Ovary (tissue), 10 donors: ENCODE measurements at regions of chr6 and their contacts with region 1.

Region 1: GRCh38 chr6:35293671-35294070 is 3.9 kb upstream of the DEF6 start:
- DNase-seq: no peak
- H3K4me3 ChIP-seq: no peak overlapping the region
- H3K27ac ChIP-seq: no peak overlapping the region
- H3K4me1 ChIP-seq: peaks cover 4% of the 10 kb centered on the region
- H3K27me3 ChIP-seq: no peaks in the 10 kb centered on the region
- CTCF ChIP-seq: no peak
- EP300 ChIP-seq: no peak
- POLR2A ChIP-seq: no peak

Region 2: DNA sequence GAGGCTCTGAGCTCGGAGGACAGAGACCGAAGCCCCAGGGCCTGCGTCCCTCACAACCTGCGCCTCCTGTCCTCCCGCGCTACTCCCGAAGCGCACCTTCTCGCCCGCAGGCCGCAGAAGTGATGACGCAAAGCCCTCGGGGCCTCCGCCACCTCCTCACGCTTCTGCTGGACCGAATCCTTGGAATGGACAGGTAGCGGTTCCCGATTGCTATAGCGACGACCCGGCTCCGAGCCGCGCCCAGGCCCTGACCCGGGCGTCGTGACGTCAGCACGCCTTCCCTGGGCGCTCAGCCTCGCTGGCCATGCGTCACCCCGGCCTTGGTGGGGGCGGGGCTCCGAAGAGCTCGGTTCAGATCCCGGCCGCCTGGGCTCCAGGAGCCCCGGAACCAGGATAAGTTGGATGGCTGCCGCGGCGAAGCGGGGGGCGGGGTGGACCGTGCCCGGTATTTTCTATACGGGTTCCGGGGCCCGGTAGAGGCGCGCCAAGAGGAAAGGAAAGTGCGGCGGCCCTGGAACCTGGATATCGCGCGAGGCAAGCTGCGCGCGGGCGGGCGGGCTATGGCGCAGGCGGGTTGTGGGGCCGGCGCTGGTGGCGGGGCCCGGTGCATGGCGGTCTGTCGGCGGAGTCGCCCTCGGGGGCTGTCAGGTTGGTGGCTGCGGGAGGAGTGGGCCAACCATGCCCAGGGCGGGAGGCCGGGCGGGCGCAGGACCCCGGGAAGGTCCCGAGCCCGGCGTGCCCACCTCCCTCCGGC is 34.3 kb before region 1 on chr6 and contains the start of gene ZNF76:
- intact Hi-C with region 1: loop called in 1 of 4 experiments (anchors 1 kb)
- DNase-seq: peak; percentile 99 to 100 (median 99)
- H3K4me3 ChIP-seq: peak within 1 kb of the TSS; percentile 96
- H3K27ac ChIP-seq: peak within 1 kb of the TSS; percentile 98 to 99
- H3K4me1 ChIP-seq: peaks cover 6% of the 10 kb centered on the region
- H3K27me3 ChIP-seq: no peaks in the 10 kb centered on the region
- CTCF ChIP-seq: peak in 2 of 3 donors; percentile 25 to 75
- EP300 ChIP-seq: no peak
- POLR2A ChIP-seq: peak; percentile 86
- total RNA-seq, gene ZNF76: 36.0 to 55.0 (median 47.9) TPM